Mammary epithelial cell (primary cell): ENCODE measurements at regions of chr13 and their contacts with region 1.

Region 1: DNA sequence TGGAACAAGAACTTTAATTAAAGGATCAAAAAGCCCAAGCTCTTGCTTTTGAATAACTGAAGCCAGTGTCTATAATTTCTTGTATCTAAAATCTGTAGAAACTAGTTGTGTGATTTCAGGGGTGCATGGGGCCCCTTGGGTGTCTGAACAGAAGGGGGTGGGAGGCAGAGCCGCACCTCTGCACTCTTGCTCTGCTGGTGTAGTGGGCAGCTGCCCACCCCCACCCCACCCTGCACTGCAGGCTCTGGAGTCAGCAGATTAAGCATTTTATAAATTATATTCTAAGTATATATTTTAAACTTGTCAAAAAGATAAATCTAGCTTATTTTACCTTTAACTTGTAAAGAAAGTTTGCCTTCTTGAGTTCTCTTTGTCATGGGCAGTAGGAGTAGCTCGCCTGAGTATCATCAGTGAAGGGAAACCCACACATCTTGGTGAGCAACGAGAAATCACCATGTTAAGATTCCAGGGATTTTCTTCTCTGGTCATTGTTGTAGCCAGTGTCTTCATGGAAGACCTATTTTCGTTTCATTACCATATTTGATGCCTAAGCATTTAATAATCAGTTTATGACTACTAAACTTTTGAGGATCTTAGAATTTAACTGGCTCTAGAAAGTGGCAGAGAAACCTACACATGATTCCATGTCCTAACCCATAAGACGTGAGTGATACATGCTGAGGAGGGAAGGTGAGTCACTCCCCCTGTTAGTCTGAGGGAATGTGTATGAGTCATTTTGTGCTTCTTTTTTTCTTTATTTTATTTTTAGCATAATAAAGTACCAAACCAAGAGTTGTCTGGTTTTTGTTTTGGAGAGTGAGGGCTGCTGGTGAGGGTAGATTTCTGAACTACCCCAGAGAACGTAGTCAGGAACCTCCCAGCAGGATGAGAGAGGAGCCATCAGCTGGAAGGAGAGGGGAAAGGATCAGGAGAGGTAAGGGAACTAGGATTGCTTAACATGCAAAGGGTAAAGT is 7.7 kb downstream of the UBE2L5 start:
- DNase-seq: peak; percentile 91
- H3K4me3 ChIP-seq: peak overlapping the region in 1 of 3 experiments; percentile 18
- H3K27ac ChIP-seq: peak overlapping the region; percentile 71
- H3K4me1 ChIP-seq: peaks cover 35% of the 10 kb centered on the region
- H3K27me3 ChIP-seq: no peaks in the 10 kb centered on the region
- CTCF ChIP-seq: no peak

Region 2: GRCh38 chr13:30371649-30372265 is 58.3 kb before region 1 on chr13:
- CTCF ChIA-PET with region 1: no interaction called
- dilution Hi-C with region 1: no loop called
- in situ Hi-C with region 1: no loop called
- intact Hi-C with region 1: no loop called
- DNase-seq: peak; percentile 88
- H3K4me3 ChIP-seq: no peak overlapping the region
- H3K27ac ChIP-seq: no peak overlapping the region
- H3K4me1 ChIP-seq: peaks cover 17% of the 10 kb centered on the region
- H3K27me3 ChIP-seq: no peaks in the 10 kb centered on the region
- CTCF ChIP-seq: no peak

Region 3: DNA sequence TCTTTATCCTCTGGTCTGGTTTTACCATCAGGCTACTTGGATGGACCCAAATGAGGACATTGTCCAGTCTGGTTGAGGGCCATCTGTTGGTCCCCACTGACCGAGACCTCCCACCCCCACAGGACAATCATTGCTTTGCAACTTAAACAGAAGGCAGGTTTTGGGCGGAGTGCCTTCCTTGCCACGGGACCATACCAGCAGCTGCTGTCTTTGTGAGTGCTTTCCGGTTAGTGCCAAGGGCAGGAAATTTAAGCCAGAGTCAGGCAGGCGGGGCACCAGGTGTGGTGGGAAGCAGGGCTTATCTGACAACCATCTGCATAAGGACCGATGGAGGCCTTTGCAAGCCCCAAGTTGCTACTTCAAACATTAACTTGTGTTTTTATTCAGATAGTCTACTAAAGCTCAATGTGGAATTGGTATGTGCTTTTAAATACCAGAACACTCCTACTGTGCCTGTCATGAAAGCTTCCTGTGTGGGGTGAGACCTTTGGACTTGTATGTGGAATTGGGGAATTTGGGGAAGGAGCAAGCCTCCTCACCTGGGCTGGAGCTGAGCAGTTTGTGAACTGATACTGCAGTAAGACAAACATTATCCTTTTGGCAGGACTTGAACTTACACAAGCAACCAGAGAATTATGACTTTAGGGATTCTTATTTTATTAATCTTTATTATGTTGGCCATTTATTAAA is 47.0 kb before region 1 on chr13:
- CTCF ChIA-PET with region 1: no interaction called
- dilution Hi-C with region 1: loop called (anchors 5 kb)
- in situ Hi-C with region 1: no loop called
- intact Hi-C with region 1: no loop called
- DNase-seq: no peak
- H3K4me3 ChIP-seq: no peak overlapping the region
- H3K27ac ChIP-seq: no peak overlapping the region
- H3K4me1 ChIP-seq: no peaks in the 10 kb centered on the region
- H3K27me3 ChIP-seq: no peaks in the 10 kb centered on the region
- CTCF ChIP-seq: no peak